Breast epithelium (tissue), 4 donors: ENCODE measurements at regions of chr1 and their contacts with region 1.

Region 1: GRCh38 chr1:67983867-67984266 is 66.6 kb downstream of the DIRAS3 start:
- DNase-seq: no peak
- H3K4me3 ChIP-seq: no peak overlapping the region
- H3K27ac ChIP-seq: no peak overlapping the region
- H3K4me1 ChIP-seq: no peaks in the 10 kb centered on the region
- H3K27me3 ChIP-seq: no peaks in the 10 kb centered on the region
- CTCF ChIP-seq: no peak
- POLR2A ChIP-seq: no peak

Region 2: GRCh38 chr1:68585351-68585750 is 601.5 kb after region 1 on chr1:
- intact Hi-C with region 1: loop called (anchors 5 kb)
- DNase-seq: no peak
- H3K4me3 ChIP-seq: no peak overlapping the region
- H3K27ac ChIP-seq: no peak overlapping the region
- H3K4me1 ChIP-seq: no peaks in the 10 kb centered on the region
- H3K27me3 ChIP-seq: no peaks in the 10 kb centered on the region
- CTCF ChIP-seq: no peak
- POLR2A ChIP-seq: no peak

Region 3: DNA sequence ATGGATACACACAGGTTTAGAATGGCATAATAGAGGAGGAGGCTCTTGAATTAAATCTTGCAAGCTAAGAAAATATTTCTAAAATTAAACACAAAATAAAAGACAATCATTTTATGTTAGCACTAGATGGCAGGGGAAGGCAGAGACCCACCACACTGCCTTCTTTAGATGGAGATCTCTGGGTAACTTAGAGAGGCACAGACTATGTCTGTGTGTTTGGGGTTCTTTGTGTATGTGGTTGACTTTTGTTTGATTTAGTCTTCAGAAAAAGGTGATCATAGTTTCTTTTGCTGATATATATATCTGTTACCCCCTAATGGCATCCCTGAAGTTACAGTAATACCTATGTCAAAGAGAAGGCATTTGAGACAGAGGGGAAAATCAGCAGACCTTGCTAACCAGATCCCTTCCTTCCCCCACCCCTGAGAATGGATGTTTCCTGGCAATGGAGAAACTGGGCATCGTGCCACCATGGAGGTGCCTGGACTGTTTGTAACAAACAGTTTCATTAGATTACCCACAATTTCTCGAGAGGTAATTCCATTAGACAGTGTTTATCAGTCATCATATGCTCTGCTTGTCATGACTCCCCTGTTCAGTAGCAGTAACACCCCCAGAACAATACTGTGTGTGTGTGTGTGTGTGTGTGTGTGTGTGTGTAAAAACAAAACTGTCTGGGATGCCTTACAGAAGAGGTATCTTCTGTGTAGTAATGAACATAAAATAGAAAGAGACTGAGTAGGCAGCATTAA is 741.3 kb after region 1 on chr1:
- intact Hi-C with region 1: no loop called
- DNase-seq: no peak
- H3K4me3 ChIP-seq: no peak overlapping the region
- H3K27ac ChIP-seq: no peak overlapping the region
- H3K4me1 ChIP-seq: no peaks in the 10 kb centered on the region
- H3K27me3 ChIP-seq: no peaks in the 10 kb centered on the region
- CTCF ChIP-seq: no peak
- POLR2A ChIP-seq: no peak